ENCODE measurements at regions of chr18 and their contacts with region 1.

Region 1: DNA sequence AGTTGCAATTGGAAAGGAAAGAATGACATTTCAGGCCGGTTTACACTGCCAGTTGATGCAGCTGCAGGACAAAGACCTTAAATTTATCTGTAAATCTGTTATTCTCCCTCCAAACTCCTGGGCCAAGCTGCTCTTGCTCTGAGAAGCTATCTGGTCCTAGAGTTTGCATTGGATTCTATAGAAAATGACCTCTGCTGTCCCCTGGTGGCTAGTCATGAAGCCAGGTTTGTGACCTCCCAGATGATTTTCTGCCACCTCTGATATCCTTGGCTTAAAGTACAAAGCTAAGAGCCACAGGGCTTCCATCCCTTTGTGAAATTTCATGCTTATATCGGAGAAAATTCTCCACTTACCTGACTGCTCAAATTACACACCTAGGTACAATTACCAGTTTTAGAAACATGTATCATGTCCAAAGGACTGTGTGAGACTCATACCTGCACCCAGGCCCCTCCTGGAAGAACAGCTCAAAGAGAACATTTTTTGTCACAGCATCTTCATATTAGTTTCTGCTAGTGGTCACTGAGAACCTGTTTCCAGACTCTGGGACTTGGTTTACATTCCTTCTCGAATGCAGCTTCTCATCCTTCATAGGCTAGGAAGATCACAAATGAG is 28.9 kb upstream of the IER3IP1 start:
- DNase-seq: peak; percentile 23
- H3K4me3 ChIP-seq: no peak overlapping the region
- H3K27ac ChIP-seq: no peak overlapping the region
- H3K4me1 ChIP-seq: no peaks in the 10 kb centered on the region
- CTCF ChIP-seq: peak; percentile 68

Region 2: GRCh38 chr18:47050468-47050867 is 154.5 kb before region 1 on chr18:
- CTCF ChIA-PET with region 1: no interaction called
- POLR2A ChIA-PET with region 1: no interaction called
- intact Hi-C with region 1: loop called (anchors 5 kb)
- DNase-seq: peak; percentile 21
- H3K4me3 ChIP-seq: no peak overlapping the region
- H3K27ac ChIP-seq: no peak overlapping the region
- H3K4me1 ChIP-seq: no peaks in the 10 kb centered on the region
- CTCF ChIP-seq: peak; percentile 75

Region 3: GRCh38 chr18:47100214-47100831 is 104.7 kb before region 1 on chr18:
- CTCF ChIA-PET with region 1: no interaction called
- POLR2A ChIA-PET with region 1: no interaction called
- intact Hi-C with region 1: loop called (anchors 1 kb)
- DNase-seq: peak; percentile 33
- H3K4me3 ChIP-seq: no peak overlapping the region
- H3K27ac ChIP-seq: no peak overlapping the region
- H3K4me1 ChIP-seq: no peaks in the 10 kb centered on the region
- CTCF ChIP-seq: peak; percentile 74